ENCODE measurements at regions of chr9 and their contacts with region 1.

Region 1: DNA sequence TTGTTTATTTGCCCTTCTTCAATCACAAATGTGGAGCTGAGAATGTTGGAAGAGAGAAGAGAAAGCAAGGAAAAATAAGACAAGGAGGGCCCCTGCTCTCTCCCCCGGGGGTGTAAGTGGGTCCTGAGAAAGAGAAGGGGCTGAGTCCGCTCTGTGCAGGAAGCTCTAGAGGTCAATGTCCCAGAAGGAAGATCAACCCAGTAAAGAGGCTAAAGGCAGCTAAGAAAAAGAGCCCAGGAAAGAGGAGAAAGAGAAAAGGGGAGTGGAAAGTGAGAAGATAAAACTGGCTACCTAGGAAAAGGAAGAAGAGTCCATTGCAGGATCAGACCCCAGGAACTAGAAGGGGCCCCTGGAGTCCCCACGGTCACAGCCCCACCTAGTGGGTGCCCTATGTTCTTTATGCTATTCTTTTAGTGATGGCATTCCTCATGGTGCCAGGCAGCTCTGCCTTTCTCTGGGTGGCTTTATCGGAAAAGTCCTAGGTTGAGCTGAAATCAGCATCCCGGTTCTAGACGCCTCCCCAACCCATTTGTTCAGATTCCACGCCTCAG is 583.4 kb downstream of the ACTL7B start:
- DNase-seq: peak; percentile 54 to 72
- H3K4me3 ChIP-seq: peak overlapping the region; percentile 47; the same call in 1 of the 2 replicates
- H3K27ac ChIP-seq: peak overlapping the region; percentile 96
- H3K4me1 ChIP-seq: peaks cover 43% of the 10 kb centered on the region
- H3K27me3 ChIP-seq: no peaks in the 10 kb centered on the region
- CTCF ChIP-seq: peak; percentile 71

Region 2: GRCh38 chr9:107484117-107484723 is 788.2 kb before region 1 on chr9:
- CTCF ChIA-PET with region 1: interaction called, 5 read pairs
- POLR2A ChIA-PET with region 1: no interaction called
- intact Hi-C with region 1: loop called (anchors 1 kb)
- DNase-seq: peak; percentile 42 to 65
- H3K4me3 ChIP-seq: peak overlapping the region; percentile 100; the same call in 1 of the 2 replicates
- H3K27ac ChIP-seq: 0 out of 2 replicates have a peak overlapping the region, but pooled peaks have one; percentile 50
- H3K4me1 ChIP-seq: peaks cover 45% of the 10 kb centered on the region
- H3K27me3 ChIP-seq: no peaks in the 10 kb centered on the region
- CTCF ChIP-seq: peak; percentile 72

Region 3: DNA sequence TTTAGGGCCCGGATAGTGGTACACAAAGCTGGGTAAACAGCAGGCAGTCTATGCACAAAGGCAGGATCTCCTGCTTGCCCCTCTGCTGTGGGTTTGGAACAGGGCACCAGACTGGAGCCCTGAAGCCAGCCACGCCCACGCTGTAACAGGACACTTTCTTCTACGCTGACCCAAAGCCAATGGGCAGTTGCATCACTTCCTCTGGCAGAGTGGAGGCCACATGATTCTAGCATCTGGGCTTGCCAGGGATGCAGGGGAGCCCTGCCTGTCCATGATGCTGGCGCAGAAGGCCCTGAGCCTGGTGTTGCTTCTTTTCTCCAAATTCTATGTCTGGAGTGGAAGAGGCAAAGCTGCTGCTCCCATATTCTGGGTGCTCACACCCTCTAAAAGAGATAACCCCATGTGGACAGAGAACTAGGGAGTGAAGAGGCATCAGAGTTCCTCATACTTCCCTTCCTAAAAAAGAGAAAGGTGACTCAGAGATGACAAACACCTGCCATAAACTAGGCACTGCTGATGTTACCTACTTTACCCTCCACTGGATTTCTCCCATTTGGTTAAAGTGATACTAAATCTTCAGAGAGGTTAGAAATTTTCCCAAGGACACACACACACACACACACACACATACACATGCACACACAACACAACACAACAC is 522.5 kb before region 1 on chr9:
- CTCF ChIA-PET with region 1: no interaction called
- POLR2A ChIA-PET with region 1: no interaction called
- intact Hi-C with region 1: loop called (anchors 1 kb)
- DNase-seq: peak; percentile 86 to 87
- H3K4me3 ChIP-seq: peak overlapping the region; percentile 25; the same call in 1 of the 2 replicates
- H3K27ac ChIP-seq: peak overlapping the region; percentile 99
- H3K4me1 ChIP-seq: peaks cover 62% of the 10 kb centered on the region
- H3K27me3 ChIP-seq: no peaks in the 10 kb centered on the region
- CTCF ChIP-seq: no peak

Region 4: DNA sequence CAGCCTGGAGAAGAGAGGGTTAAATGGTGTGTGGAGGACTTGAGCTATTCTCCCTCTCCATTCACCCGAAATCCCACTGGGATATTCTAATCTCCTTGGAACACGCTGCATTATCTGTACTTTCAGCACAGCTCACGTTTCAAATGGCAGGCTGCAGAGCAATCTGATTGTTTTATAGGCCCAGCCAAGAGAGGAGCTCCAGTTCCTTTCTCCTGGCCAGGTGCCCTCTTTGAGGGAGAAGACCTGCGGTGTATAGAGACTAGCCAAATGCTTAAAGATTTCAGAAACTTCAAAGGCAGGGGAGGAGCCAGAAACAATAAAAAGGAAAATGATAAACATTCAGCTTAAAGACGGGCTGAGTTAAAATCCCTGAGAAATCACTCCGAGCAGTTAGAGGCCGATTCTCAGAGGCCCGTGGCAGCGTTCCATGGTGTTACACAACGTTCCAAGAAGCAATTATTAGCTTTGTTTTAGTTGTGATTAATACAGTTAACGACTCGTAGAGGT is 218.8 kb before region 1 on chr9:
- CTCF ChIA-PET with region 1: interaction called, 3 read pairs
- POLR2A ChIA-PET with region 1: interaction called, 3 read pairs
- intact Hi-C with region 1: loop called (anchors 1 kb)
- DNase-seq: no peak
- H3K4me3 ChIP-seq: no peak overlapping the region
- H3K27ac ChIP-seq: no peak overlapping the region
- H3K4me1 ChIP-seq: peaks cover 58% of the 10 kb centered on the region
- H3K27me3 ChIP-seq: no peaks in the 10 kb centered on the region
- CTCF ChIP-seq: no peak

Region 5: GRCh38 chr9:108182950-108183381 is 89.5 kb before region 1 on chr9:
- CTCF ChIA-PET with region 1: no interaction called
- POLR2A ChIA-PET with region 1: no interaction called
- intact Hi-C with region 1: loop called (anchors 1 kb)
- DNase-seq: no peak
- H3K4me3 ChIP-seq: no peak overlapping the region
- H3K27ac ChIP-seq: no peak overlapping the region
- H3K4me1 ChIP-seq: no peaks in the 10 kb centered on the region
- H3K27me3 ChIP-seq: no peaks in the 10 kb centered on the region
- CTCF ChIP-seq: no peak

Region 6: DNA sequence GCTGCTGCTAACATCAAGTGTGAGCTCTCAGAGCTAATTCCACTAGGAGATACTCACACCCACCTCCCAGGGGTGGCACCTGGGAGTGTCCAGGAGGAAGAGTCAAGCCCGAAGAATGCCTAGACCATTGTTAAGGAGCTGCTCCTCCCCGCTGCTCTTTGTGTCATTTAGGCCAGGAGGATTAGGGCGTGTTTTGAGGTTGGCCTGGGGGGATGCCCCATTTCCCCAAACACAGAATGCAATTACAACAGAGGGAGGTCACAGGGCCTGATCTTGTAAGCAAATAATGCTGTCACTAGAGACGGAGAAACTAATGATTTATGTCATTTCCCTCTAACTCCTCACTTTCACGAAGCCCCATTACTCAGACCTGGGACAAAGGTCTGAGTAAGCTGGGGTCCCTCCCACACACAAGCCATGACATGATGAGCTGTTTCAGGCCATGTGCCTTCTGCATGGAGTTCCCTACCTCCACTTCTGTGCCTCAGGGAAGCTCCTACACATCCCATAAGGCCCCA is 270.9 kb after region 1 on chr9:
- CTCF ChIA-PET with region 1: no interaction called
- POLR2A ChIA-PET with region 1: no interaction called
- intact Hi-C with region 1: loop called (anchors 2 kb)
- DNase-seq: peak; percentile 92 to 99
- H3K4me3 ChIP-seq: no peak overlapping the region; the same call in 1 of the 2 replicates
- H3K27ac ChIP-seq: peak overlapping the region; percentile 73
- H3K4me1 ChIP-seq: peaks cover 24% of the 10 kb centered on the region
- H3K27me3 ChIP-seq: no peaks in the 10 kb centered on the region
- CTCF ChIP-seq: 0 out of 2 replicates have a peak, but pooled peaks have one; percentile 14

Region 7: GRCh38 chr9:108813951-108814601 is 541.7 kb after region 1 on chr9:
- CTCF ChIA-PET with region 1: no interaction called
- POLR2A ChIA-PET with region 1: no interaction called
- intact Hi-C with region 1: loop called (anchors 5 kb)
- DNase-seq: peak; percentile 73 to 90
- H3K4me3 ChIP-seq: no peak overlapping the region
- H3K27ac ChIP-seq: 0 out of 2 replicates have a peak overlapping the region, but pooled peaks have one; percentile 35
- H3K4me1 ChIP-seq: peaks cover 20% of the 10 kb centered on the region
- H3K27me3 ChIP-seq: no peaks in the 10 kb centered on the region
- CTCF ChIP-seq: peak; percentile 87

Measured in PC-9 (cell line).